Panc1 (cell line): ENCODE measurements at regions of chrX and their contacts with region 1.

Region 1: DNA sequence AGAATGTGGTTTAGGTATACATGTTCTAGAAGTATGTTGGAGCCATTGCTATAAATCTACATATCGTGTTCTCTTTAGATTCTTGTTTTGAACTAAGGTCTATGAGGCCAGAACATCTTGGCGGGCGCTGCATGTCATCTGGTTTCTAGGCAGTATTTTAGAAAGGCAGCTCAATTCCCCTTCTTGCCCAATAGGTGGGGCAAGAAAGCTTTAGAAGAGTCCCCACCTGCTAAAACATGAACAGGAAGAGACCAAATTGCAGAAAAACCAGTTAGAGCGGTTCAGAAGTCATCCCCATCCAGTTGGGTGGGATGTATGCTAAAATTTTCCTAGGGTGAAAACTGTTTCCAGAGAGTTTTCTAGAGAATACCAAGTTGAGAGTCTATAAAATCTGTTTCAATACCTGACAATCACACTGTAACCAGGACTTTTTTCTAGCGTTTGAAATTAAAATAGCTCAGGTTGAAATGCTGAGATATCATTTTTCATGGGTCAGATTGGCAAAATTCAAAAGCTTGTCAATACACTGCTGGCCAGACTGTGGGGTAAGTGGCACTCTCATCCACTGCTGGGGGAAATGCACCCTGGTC is 17.5 kb upstream of the SH3KBP1 start:
- DNase-seq: no peak
- ATAC-seq: peak; percentile 62; the same call in 1 of the 2 replicates
- H3K4me3 ChIP-seq: no peak overlapping the region
- H3K27ac ChIP-seq: no peak overlapping the region
- H3K4me1 ChIP-seq: no peaks in the 10 kb centered on the region
- H3K27me3 ChIP-seq: no peaks in the 10 kb centered on the region
- CTCF ChIP-seq: peak; percentile 78

Region 2: DNA sequence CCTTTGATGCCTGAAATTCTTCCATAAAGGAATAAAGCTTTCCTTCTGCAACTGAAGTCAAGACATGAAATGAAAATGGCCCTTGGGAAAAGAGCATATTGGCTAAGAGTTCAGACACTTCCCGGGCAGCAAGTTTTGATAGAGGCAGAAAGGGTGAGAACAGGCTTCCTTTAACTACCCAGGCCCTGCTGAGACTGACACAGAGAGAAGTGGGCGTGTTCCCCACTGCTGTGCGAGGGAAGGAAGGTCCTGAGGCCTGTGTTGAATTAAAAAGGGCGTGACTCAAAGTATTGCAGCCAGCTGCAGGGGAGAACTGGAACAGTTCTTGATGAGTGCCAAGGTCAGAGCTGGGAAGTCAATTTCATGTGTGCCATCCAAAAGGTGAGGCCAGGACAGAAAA is 748.7 kb before region 1 on chrX:
- CTCF ChIA-PET with region 1: no interaction called
- POLR2A ChIA-PET with region 1: interaction called, 13 read pairs
- in situ Hi-C with region 1: no loop called
- intact Hi-C with region 1: no loop called
- DNase-seq: no peak
- ATAC-seq: no peak
- H3K4me3 ChIP-seq: no peak overlapping the region
- H3K27ac ChIP-seq: no peak overlapping the region
- H3K4me1 ChIP-seq: no peaks in the 10 kb centered on the region
- H3K27me3 ChIP-seq: 0 out of 2 replicates have a peak, but pooled peaks cover 2% of the 10 kb centered on the region
- CTCF ChIP-seq: no peak

Region 3: GRCh38 chrX:19462231-19462630 is 442.6 kb before region 1 on chrX:
- CTCF ChIA-PET with region 1: no interaction called
- POLR2A ChIA-PET with region 1: no interaction called
- in situ Hi-C with region 1: no loop called
- intact Hi-C with region 1: no loop called
- DNase-seq: no peak
- ATAC-seq: no peak
- H3K4me3 ChIP-seq: no peak overlapping the region
- H3K27ac ChIP-seq: no peak overlapping the region
- H3K4me1 ChIP-seq: no peaks in the 10 kb centered on the region
- H3K27me3 ChIP-seq: no peaks in the 10 kb centered on the region
- CTCF ChIP-seq: no peak